Common myeloid progenitor, CD34-positive (primary cell): ENCODE measurements at regions of chr11 and their contacts with region 1.

Region 1: GRCh38 chr11:19566583-19567379 is 145.9 kb upstream of the NAV2 start:
- DNase-seq: no peak
- H3K4me3 ChIP-seq: no peak overlapping the region
- H3K27ac ChIP-seq: no peak overlapping the region
- H3K4me1 ChIP-seq: peaks cover 0 to 8% (median 2%) of the 10 kb centered on the region in 4 experiments
- H3K27me3 ChIP-seq: peaks cover 0 to 11% (median 2%) of the 10 kb centered on the region in 5 experiments

Region 2: GRCh38 chr11:19577391-19577975 is 10.7 kb after region 1 on chr11:
- CTCF ChIA-PET with region 1: interaction called, 46 read pairs
- POLR2A ChIA-PET with region 1: no interaction called
- DNase-seq: peak in 2 of 3 donors; percentile 30 to 53
- H3K4me3 ChIP-seq: peak overlapping the region in 1 of 7 experiments; percentile 30
- H3K27ac ChIP-seq: no peak overlapping the region
- H3K4me1 ChIP-seq: peaks cover 6 to 25% (median 17%) of the 10 kb centered on the region in 4 experiments
- H3K27me3 ChIP-seq: peaks cover 0 to 2% (median 0%) of the 10 kb centered on the region in 5 experiments

Region 3: GRCh38 chr11:19769820-19770219 is 203.0 kb after region 1 on chr11:
- CTCF ChIA-PET with region 1: no interaction called
- POLR2A ChIA-PET with region 1: no interaction called
- DNase-seq: no peak
- H3K4me3 ChIP-seq: no peak overlapping the region
- H3K27ac ChIP-seq: no peak overlapping the region
- H3K4me1 ChIP-seq: no peaks in the 10 kb centered on the region
- H3K27me3 ChIP-seq: peaks cover 6 to 16% (median 7%) of the 10 kb centered on the region in 5 experiments